ENCODE measurements at regions of chr6 and their contacts with region 1.

Region 1: DNA sequence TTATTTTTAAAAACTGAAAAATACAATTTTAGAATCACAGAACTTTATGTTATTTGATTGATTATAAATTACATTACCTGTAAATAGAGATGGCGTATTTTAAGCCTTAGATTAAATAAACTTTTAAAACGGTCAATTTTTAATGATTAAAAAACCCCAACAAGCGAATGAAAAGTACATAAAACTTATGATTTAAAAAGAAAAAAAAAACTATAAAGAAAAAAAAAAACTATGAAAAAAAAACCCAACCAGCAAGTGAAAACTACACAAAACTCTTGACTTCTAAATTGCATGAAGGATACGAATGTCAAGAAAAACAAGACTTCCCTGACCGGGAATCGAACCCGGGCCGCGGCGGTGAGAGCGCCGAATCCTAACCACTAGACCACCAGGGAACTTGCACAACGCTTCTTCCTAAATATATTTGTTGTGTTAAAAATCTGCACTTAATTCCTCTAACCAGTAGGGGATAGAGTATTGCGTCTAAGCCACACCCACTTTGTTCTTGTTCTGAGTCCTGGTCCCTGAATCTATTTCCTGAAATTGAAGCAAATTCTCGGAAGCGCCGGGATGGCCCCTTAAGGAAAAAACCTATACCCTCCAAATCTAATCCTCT is 10.7 kb upstream of the NCOA7 start:
- DNase-seq: peak; percentile 96
- H3K4me3 ChIP-seq: peak overlapping the region; percentile 54
- H3K27ac ChIP-seq: peak overlapping the region; percentile 82
- H3K4me1 ChIP-seq: peaks cover 17% of the 10 kb centered on the region
- H3K27me3 ChIP-seq: no peaks in the 10 kb centered on the region
- CTCF ChIP-seq: no peak

Region 2: DNA sequence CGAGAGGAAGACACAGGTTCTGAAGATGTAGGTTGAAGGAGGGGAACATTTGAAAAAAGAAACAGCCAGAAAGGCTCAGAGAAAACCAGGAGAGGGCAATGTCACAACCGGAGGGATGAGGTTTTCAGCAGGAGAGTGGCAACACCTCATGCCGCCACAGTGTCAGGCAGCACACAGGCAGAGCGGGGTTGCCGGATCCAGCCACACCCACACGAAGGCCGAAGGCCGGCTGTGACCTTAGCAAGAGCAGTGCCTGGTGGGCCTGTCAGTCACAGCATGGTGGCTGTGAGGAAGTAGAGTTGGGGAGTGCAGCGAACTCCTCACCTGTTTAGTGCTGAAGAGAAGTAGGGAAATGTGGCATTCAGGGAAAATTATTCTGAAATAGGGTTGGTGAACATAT is 492.3 kb before region 1 on chr6:
- CTCF ChIA-PET with region 1: no interaction called
- POLR2A ChIA-PET with region 1: no interaction called
- intact Hi-C with region 1: no loop called
- DNase-seq: no peak
- H3K4me3 ChIP-seq: no peak overlapping the region
- H3K27ac ChIP-seq: no peak overlapping the region
- H3K4me1 ChIP-seq: no peaks in the 10 kb centered on the region
- H3K27me3 ChIP-seq: no peaks in the 10 kb centered on the region
- CTCF ChIP-seq: no peak

Region 3: DNA sequence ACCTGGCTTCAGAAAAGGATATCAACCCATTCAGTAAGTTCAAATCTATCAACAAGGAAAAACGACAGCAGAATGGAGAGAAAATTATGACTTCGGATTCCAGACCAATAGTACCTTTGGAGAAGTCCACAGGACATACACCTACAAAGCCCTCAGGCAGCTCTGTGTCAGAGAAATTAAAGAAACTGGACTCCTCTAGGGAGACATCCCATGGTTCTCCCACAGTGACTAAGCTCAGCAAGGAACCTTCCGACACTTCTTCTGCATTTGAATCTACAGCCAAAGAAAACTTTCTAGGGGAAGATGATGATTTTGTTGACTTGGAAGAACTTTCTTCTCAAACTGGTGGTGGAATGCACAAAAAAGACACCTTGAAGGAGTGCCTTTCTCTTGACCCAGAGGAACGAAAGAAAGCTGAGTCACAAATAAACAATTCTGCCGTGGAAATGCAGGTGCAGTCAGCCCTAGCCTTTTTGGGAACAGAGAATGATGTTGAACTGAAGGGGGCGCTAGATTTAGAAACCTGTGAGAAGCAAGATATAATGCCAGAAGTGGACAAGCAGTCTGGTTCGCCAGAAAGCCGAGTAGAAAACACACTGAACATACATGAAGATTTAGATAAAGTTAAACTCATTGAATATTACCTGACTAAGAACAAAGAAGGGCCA is 109.1 kb after region 1 on chr6:
- CTCF ChIA-PET with region 1: no interaction called
- POLR2A ChIA-PET with region 1: no interaction called
- intact Hi-C with region 1: no loop called
- DNase-seq: peak; percentile 58
- H3K4me3 ChIP-seq: no peak overlapping the region
- H3K27ac ChIP-seq: no peak overlapping the region
- H3K4me1 ChIP-seq: no peaks in the 10 kb centered on the region
- H3K27me3 ChIP-seq: no peaks in the 10 kb centered on the region
- CTCF ChIP-seq: peak; percentile 70

Region 4: DNA sequence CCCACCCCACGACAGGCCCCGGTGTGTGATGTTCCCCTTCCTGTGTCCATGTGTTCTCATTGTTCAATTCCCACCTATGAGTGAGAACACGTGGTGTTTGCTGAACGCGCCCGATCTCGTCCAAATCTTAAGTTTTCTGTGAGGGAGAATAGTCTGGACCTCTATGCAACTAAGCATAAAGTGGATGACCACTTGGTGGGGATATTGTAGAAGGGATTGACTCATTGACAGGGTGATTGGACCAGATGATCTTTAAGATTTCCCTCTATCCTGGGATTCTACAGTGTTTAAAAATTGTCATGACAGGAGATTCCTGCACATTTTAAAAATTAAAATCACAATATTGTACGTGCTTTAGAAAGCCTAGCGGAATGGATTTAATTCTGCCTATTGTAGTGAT is 347.6 kb after region 1 on chr6:
- CTCF ChIA-PET with region 1: no interaction called
- POLR2A ChIA-PET with region 1: no interaction called
- intact Hi-C with region 1: no loop called
- DNase-seq: peak; percentile 12
- H3K4me3 ChIP-seq: no peak overlapping the region
- H3K27ac ChIP-seq: no peak overlapping the region
- H3K4me1 ChIP-seq: no peaks in the 10 kb centered on the region
- H3K27me3 ChIP-seq: no peaks in the 10 kb centered on the region
- CTCF ChIP-seq: 0 out of 2 replicates have a peak, but pooled peaks have one; percentile 18

Region 5: DNA sequence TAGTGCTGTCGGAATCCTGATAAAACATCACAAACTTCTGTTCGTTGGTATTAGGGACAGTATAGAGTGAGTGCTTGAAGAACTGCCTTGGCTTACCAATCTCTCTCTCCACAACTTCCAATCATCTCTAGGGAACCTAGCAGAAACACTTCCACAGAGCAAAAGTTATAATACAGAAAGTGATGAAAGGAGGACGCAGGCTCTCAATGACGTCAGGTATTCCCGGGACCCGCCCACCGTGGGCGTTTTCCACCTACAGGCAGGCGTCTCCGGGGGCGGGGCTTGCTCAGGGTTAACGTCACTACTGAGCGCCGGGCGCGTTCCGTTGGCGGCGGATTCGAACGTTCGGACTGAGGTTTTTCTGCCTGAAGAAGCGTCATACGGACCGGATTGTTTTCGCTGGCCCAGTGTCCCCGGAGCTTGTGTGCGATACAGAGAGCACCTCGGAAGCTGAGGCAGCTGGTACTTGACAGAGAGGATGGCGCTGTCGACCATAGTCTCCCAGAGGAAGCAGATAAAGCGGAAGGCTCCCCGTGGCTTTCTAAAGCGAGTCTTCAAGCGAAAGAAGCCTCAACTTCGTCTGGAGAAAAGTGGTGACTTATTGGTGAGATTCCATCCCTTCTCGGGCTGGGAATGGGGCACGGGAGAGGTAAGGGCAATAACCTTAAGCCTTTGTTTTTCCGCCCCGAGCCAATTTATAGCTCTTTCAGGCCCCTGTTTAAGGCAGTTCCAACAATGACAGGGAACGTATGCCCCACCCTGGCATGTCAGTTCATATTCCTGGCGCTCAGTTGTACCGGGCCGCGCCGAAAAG is 560.0 kb after region 1 on chr6 and contains the start of gene CENPW:
- CTCF ChIA-PET with region 1: no interaction called
- POLR2A ChIA-PET with region 1: no interaction called
- intact Hi-C with region 1: loop called (anchors 10 kb)
- DNase-seq: peak; percentile 95
- H3K4me3 ChIP-seq: peak within 1 kb of the TSS; percentile 67
- H3K27ac ChIP-seq: peak within 1 kb of the TSS; percentile 62
- H3K4me1 ChIP-seq: peaks cover 8% of the 10 kb centered on the region
- H3K27me3 ChIP-seq: no peaks in the 10 kb centered on the region
- CTCF ChIP-seq: no peak
- total RNA-seq, gene CENPW: 78.4 and 88.0 TPM in 2 replicates